ENCODE measurements at regions of chr1 and their contacts with region 1.

Region 1: GRCh38 chr1:116558140-116558549 is 12.7 kb downstream of the CD58 start:
- DNase-seq: no peak
- H3K4me3 ChIP-seq: no peak overlapping the region
- H3K27ac ChIP-seq: no peak overlapping the region
- H3K4me1 ChIP-seq: peaks cover 5% of the 10 kb centered on the region
- H3K27me3 ChIP-seq: no peaks in the 10 kb centered on the region
- CTCF ChIP-seq: no peak

Region 2: GRCh38 chr1:117093870-117094621 is 535.9 kb after region 1 on chr1:
- CTCF ChIA-PET with region 1: interaction called, 10 read pairs
- POLR2A ChIA-PET with region 1: no interaction called
- intact Hi-C with region 1: no loop called
- DNase-seq: peak; percentile 75
- H3K4me3 ChIP-seq: no peak overlapping the region
- H3K27ac ChIP-seq: peak overlapping the region; percentile 45
- H3K4me1 ChIP-seq: peaks cover 21% of the 10 kb centered on the region
- H3K27me3 ChIP-seq: no peaks in the 10 kb centered on the region
- CTCF ChIP-seq: peak; percentile 34; the same call in 1 of the 2 replicates